Caco-2 (cell line): ENCODE measurements at regions of chr1 and their contacts with region 1.

Region 1: DNA sequence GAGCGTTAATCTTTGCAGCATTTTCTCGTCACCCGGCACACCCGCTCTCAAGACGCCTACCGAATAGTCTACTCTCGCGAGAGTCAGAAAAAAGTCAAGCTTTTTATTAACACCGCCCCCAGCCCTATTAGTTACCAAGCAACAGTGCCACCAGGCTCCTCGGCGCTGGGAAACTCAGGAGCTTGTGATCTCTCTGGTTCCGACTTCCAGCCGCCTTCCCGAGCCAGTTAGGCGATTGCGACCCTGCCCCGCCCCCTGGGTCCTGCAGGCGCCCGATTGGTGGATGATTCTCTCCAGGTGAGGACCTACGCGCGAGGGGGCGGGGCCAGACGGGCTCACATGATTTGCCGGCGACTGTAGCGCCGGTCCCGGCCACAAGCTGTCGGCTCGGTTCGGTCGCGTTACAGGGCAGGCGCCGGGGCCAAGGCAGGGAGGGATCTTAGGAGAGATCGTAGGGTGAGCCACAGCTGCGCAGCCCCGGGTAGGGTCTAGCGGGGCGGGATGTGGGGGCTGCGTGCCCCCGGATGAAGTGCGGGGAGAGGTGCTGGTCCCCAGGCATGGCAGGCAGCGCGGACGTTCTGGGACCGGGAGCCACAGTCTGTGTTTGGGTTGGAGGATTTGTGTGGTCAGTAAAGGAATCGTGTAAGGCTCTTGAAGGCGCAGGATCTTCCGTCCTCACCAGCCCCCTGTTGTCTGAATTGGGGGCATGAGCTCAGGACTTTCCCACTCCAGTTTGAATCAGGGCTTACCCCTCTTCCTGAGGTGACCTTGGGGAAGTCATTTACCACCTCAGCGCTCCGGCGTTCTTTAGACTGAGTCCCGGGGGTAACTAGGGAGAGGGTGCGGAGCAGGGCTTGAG is at the start of gene PFKFB2:
- DNase-seq: peak; percentile 100
- H3K4me3 ChIP-seq: peak within 1 kb of the TSS; percentile 73
- H3K4me3 Mint-ChIP-seq: peak within 1 kb of the TSS; percentile 94
- H3K27ac Mint-ChIP-seq: peak within 1 kb of the TSS; percentile 97
- H3K4me1 ChIP-seq: peaks cover 4% of the 10 kb centered on the region
- H3K4me1 Mint-ChIP-seq: peaks cover 15% of the 10 kb centered on the region
- H3K27me3 ChIP-seq: no peaks in the 10 kb centered on the region
- H3K27me3 Mint-ChIP-seq: no peaks in the 10 kb centered on the region
- CTCF ChIP-seq: no peak
- total RNA-seq, gene PFKFB2: 36.4 and 38.9 TPM in 2 replicates

Region 2: DNA sequence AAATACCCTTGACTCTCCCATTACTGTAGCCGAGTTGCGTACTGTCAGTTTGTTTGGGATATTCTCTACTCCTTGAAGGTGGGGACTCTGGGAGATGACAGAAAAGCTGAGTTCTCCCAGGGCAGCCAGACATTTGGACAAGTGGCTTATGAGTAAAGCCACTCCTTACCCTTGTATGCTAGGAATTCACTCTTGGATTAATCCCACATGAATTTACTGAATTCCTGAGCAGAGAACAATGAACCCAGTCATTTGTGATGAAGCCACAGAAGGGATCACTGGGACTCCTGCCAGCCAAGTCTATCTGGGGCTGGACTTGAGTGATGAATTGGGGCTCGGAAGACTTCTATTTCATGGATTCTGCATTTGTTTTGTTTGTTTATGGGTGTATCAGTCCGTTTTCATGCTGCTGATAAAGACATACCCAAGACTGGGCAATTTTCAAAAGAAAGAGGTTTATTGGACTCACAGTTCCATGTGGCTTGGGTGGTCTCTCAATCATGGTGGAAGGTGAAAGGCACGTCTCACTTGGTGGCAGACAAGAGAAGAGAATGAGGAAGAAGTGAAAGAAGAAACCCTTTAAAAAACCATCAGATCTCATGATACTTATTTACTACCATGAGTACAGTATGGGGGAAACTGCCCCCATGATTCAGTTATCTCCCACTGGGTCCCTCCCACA is 45.6 kb before region 1 on chr1:
- CTCF ChIA-PET with region 1: no interaction called
- POLR2A ChIA-PET with region 1: interaction called, 5 read pairs
- intact Hi-C with region 1: loop called (anchors 1 kb)
- DNase-seq: peak; percentile 76 to 81
- H3K4me3 ChIP-seq: no peak overlapping the region
- H3K4me3 Mint-ChIP-seq: peak overlapping the region; percentile 31
- H3K27ac Mint-ChIP-seq: peak overlapping the region; percentile 97
- H3K4me1 ChIP-seq: peaks cover 72% of the 10 kb centered on the region
- H3K4me1 Mint-ChIP-seq: peaks cover 49% of the 10 kb centered on the region
- H3K27me3 ChIP-seq: no peaks in the 10 kb centered on the region
- H3K27me3 Mint-ChIP-seq: no peaks in the 10 kb centered on the region
- CTCF ChIP-seq: no peak

Region 3: GRCh38 chr1:207077470-207078377 is 24.6 kb after region 1 on chr1:
- CTCF ChIA-PET with region 1: no interaction called
- POLR2A ChIA-PET with region 1: no interaction called
- intact Hi-C with region 1: loop called (anchors 1 kb)
- DNase-seq: peak; percentile 58 to 81
- H3K4me3 ChIP-seq: no peak overlapping the region
- H3K4me3 Mint-ChIP-seq: no peak overlapping the region
- H3K27ac Mint-ChIP-seq: no peak overlapping the region
- H3K4me1 ChIP-seq: no peaks in the 10 kb centered on the region
- H3K4me1 Mint-ChIP-seq: no peaks in the 10 kb centered on the region
- H3K27me3 ChIP-seq: no peaks in the 10 kb centered on the region
- H3K27me3 Mint-ChIP-seq: no peaks in the 10 kb centered on the region
- CTCF ChIP-seq: peak; percentile 89 to 92

Region 4: GRCh38 chr1:207145401-207146058 is 92.4 kb after region 1 on chr1:
- CTCF ChIA-PET with region 1: no interaction called
- POLR2A ChIA-PET with region 1: no interaction called
- intact Hi-C with region 1: no loop called
- DNase-seq: no peak
- H3K4me3 ChIP-seq: no peak overlapping the region
- H3K4me3 Mint-ChIP-seq: no peak overlapping the region
- H3K27ac Mint-ChIP-seq: no peak overlapping the region
- H3K4me1 ChIP-seq: no peaks in the 10 kb centered on the region
- H3K4me1 Mint-ChIP-seq: no peaks in the 10 kb centered on the region
- H3K27me3 ChIP-seq: no peaks in the 10 kb centered on the region
- H3K27me3 Mint-ChIP-seq: no peaks in the 10 kb centered on the region
- CTCF ChIP-seq: no peak

Region 5: GRCh38 chr1:207321079-207321789 is 268.1 kb after region 1 on chr1 and contains the start of gene CD55:
- CTCF ChIA-PET with region 1: interaction called, 6 read pairs
- POLR2A ChIA-PET with region 1: interaction called, 15 read pairs
- intact Hi-C with region 1: loop called (anchors 1 kb)
- DNase-seq: peak; percentile 99
- H3K4me3 ChIP-seq: peak within 1 kb of the TSS; percentile 80
- H3K4me3 Mint-ChIP-seq: peak within 1 kb of the TSS; percentile 83
- H3K27ac Mint-ChIP-seq: peak within 1 kb of the TSS; percentile 95
- H3K4me1 ChIP-seq: peaks cover 39% of the 10 kb centered on the region
- H3K4me1 Mint-ChIP-seq: peaks cover 17% of the 10 kb centered on the region
- H3K27me3 ChIP-seq: no peaks in the 10 kb centered on the region
- H3K27me3 Mint-ChIP-seq: no peaks in the 10 kb centered on the region
- CTCF ChIP-seq: peak; percentile 34 to 41
- total RNA-seq, gene CD55: 195 and 197 TPM in 2 replicates